MCF 10A (cell line): ENCODE measurements at regions of chr17 and their contacts with region 1.

Region 1: GRCh38 chr17:63827002-63827771 is at the starts of genes FTSJ3 and PSMC5:
- DNase-seq: peak; percentile 96
- H3K4me3 Mint-ChIP-seq: peak within 1 kb of the TSS; percentile 100
- H3K27ac Mint-ChIP-seq: peak within 1 kb of the TSS; percentile 100
- H3K4me1 Mint-ChIP-seq: peaks cover 27% of the 10 kb centered on the region
- H3K27me3 Mint-ChIP-seq: no peaks in the 10 kb centered on the region
- CTCF ChIP-seq: peak; percentile 26
- total RNA-seq, gene FTSJ3: 36.7 and 49.5 TPM in 2 replicates
- total RNA-seq, gene PSMC5: 148 and 151 TPM in 2 replicates

Region 2: DNA sequence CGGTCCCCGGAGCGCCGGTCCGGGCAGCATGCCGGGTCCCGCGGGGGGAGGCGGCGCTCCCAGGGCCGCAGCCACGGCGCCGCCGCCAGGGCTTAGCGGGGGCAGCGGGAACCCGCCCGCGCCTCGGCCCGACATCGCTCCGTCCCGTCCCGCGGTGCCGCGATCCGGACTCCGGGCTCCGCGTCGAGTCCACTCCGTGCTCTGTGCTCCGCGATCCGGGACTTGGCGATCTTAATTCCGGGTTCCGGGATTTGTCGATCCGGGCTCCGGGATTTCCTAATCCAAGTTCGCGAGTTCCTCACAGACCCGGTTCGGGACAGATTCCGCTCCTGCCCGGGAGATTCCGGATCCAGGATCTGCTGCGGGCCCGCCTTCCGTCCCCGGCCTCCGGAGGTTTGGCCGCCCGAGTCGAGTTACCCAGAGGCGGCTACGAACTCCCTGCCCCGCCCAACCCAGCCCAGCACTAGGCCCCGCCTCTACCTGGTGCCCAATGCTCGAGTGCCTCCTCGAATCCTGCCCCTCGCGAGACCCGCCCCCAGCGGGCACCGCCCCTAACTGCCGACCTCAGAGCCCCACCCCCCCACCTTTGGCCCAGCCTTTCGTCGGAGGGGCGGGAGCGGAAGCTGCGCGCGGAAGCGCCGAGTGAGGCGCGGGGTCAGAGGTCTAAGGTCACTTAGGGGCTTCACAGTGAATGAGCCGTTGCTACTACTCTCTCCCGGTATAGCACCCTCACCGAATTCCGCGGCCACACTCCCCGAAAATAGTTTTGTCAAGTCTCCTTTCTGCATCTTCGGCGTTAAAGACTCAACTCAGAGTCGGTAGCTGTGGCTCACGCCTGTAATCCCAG is 15.6 kb after region 1 on chr17 and contains the start of gene SMARCD2:
- CTCF ChIA-PET with region 1: interaction called, 7 read pairs
- POLR2A ChIA-PET with region 1: interaction called, 187 read pairs
- intact Hi-C with region 1: no loop called
- DNase-seq: peak; percentile 98
- H3K4me3 Mint-ChIP-seq: peak within 1 kb of the TSS; percentile 93
- H3K27ac Mint-ChIP-seq: peak within 1 kb of the TSS; percentile 90
- H3K4me1 Mint-ChIP-seq: peaks cover 36% of the 10 kb centered on the region
- H3K27me3 Mint-ChIP-seq: no peaks in the 10 kb centered on the region
- CTCF ChIP-seq: no peak
- total RNA-seq, gene SMARCD2: 43.7 and 54.6 TPM in 2 replicates

Region 3: DNA sequence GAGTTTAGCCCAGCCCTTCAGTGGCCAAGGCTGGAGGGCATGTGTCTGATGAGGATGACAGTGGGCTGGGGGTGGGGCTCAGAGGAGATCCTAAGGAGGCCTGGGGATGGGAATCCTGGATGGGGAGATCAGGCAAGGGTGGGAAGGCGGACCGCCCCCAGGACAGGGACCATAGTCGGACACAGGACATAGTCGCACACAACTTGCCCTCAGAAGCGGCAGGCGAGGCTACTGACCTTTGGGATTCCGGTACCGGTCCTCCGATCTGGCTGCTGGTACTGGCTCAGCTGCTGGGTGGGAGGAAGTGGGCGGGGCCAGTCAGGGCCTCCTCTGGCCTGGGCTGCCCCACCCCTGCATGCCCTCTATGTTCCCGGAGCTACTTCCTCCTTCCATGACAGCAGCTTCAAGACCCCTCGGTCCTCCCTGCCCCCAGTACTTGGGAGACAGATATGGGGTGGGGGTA is 103.9 kb after region 1 on chr17:
- CTCF ChIA-PET with region 1: no interaction called
- POLR2A ChIA-PET with region 1: no interaction called
- intact Hi-C with region 1: no loop called
- DNase-seq: no peak
- H3K4me3 Mint-ChIP-seq: no peak overlapping the region
- H3K27ac Mint-ChIP-seq: no peak overlapping the region
- H3K4me1 Mint-ChIP-seq: no peaks in the 10 kb centered on the region
- H3K27me3 Mint-ChIP-seq: peaks cover 7% of the 10 kb centered on the region
- CTCF ChIP-seq: no peak